OCI-LY7 (cell line): ENCODE measurements at regions of chr10 and their contacts with region 1.

Region 1: GRCh38 chr10:73859784-73860491 is 14.4 kb downstream of the CAMK2G start:
- DNase-seq: no peak
- H3K4me3 ChIP-seq: no peak overlapping the region
- H3K27ac ChIP-seq: no peak overlapping the region
- H3K4me1 ChIP-seq: peaks cover 29% of the 10 kb centered on the region
- CTCF ChIP-seq: no peak

Region 2: DNA sequence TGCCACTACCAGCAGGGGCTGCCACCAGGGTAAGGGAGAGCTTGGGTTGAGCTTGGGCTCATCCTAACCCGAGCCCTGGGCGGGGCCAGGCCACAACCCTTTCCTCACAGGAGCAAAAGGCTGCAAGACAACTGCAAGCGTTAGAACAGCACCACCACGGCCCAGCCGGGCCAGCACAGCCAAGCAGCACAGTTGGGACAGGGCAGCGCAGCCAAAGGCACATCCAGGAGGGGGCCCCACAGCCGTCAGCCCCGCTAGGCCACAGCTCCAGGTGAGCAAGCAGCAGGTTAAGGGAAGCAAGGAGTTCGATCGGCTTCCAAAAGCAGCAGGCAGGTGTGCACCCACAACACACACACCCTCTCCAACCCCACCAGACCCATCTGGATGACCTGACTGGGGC is 41.5 kb before region 1 on chr10:
- CTCF ChIA-PET with region 1: no interaction called
- POLR2A ChIA-PET with region 1: no interaction called
- intact Hi-C with region 1: loop called (anchors 1 kb)
- DNase-seq: no peak
- H3K4me3 ChIP-seq: no peak overlapping the region
- H3K27ac ChIP-seq: no peak overlapping the region
- H3K4me1 ChIP-seq: no peaks in the 10 kb centered on the region
- CTCF ChIP-seq: 0 out of 2 replicates have a peak, but pooled peaks have one; percentile 13